ENCODE measurements at regions of chr3 and their contacts with region 1.

Region 1: GRCh38 chr3:61809879-61810278 is 248.5 kb downstream of the PTPRG start:
- DNase-seq: no peak
- ATAC-seq: no peak
- H3K4me3 ChIP-seq: no peak overlapping the region
- H3K27ac ChIP-seq: no peak overlapping the region
- H3K4me1 ChIP-seq: no peaks in the 10 kb centered on the region
- H3K27me3 ChIP-seq: no peaks in the 10 kb centered on the region
- CTCF ChIP-seq: no peak
- EP300 ChIP-seq: no peak
- POLR2A ChIP-seq: no peak
- RAD21 ChIP-seq: no peak

Region 2: DNA sequence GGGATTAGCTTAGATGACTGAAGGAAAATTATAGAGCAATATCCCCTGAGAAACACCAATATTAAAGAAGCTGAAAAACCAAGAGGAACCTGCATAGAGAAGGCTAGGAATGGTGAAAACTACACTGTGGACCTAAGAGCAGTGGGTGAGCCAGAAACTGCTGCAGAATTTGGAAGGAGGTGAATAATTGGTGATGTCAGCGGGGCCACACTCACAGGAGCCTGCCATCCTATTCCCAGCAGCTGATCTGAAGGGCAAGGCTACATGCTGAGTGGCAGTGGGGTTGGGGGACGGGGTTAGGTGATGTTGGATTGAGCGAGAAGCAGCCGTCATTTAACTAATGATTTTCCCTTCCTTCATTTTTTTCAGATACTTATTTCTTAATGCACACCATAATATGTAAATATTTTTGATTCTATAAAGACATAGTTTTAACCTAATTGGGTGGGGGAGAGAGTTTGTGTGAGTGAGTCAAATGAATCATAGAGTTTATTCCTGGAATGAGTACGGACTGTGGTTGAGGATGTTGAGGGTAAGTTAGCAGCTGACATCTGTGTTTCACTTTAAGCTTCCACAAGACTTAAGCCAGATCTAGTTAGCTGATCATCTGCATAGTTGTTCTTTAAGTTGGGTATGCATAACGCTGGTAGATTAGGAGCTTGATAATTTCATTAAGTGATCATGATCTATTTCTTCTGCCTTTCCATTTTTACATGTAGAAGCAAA is 25.7 kb before region 1 on chr3:
- CTCF ChIA-PET with region 1: no interaction called
- POLR2A ChIA-PET with region 1: interaction called, 6 read pairs
- RAD21 ChIA-PET with region 1: interaction called, 5 read pairs
- SMC1A ChIA-PET with region 1: interaction called, 14 read pairs
- in situ Hi-C with region 1: no loop called
- intact Hi-C with region 1: no loop called
- DNase-seq: no peak
- ATAC-seq: peak; percentile 77
- H3K4me3 ChIP-seq: no peak overlapping the region
- H3K27ac ChIP-seq: no peak overlapping the region
- H3K4me1 ChIP-seq: no peaks in the 10 kb centered on the region
- H3K27me3 ChIP-seq: no peaks in the 10 kb centered on the region; a peak in 1 of 4 replicates
- CTCF ChIP-seq: no peak
- EP300 ChIP-seq: no peak
- POLR2A ChIP-seq: no peak
- RAD21 ChIP-seq: no peak

Region 3: DNA sequence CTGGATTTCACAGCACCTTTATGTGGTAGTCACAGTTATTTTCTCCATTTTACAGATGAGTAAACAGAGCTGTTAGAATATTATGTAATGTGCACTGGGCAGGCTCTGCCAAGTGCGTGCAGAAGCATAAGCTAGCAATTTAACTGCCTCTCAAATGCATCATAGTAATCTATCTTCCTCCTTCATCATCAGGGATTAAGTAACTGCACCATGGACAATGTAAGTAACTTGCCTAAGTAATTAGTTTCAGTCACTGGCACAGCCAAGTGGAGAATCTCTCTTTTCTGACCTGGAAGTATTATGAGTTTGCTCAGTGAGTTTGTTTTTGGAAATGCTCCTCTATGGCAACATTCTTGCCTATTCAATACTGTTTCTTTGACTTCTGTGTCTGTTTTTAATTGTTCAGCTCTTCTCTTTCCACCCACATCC is 12.0 kb after region 1 on chr3:
- CTCF ChIA-PET with region 1: interaction called, 3 read pairs
- POLR2A ChIA-PET with region 1: interaction called, 7 read pairs
- RAD21 ChIA-PET with region 1: interaction called, 5 read pairs
- SMC1A ChIA-PET with region 1: interaction called, 10 read pairs
- in situ Hi-C with region 1: no loop called
- intact Hi-C with region 1: no loop called
- DNase-seq: no peak
- ATAC-seq: peak; percentile 41
- H3K4me3 ChIP-seq: no peak overlapping the region
- H3K27ac ChIP-seq: no peak overlapping the region
- H3K4me1 ChIP-seq: no peaks in the 10 kb centered on the region
- H3K27me3 ChIP-seq: no peaks in the 10 kb centered on the region
- CTCF ChIP-seq: no peak
- EP300 ChIP-seq: no peak
- POLR2A ChIP-seq: no peak
- RAD21 ChIP-seq: no peak

Region 4: DNA sequence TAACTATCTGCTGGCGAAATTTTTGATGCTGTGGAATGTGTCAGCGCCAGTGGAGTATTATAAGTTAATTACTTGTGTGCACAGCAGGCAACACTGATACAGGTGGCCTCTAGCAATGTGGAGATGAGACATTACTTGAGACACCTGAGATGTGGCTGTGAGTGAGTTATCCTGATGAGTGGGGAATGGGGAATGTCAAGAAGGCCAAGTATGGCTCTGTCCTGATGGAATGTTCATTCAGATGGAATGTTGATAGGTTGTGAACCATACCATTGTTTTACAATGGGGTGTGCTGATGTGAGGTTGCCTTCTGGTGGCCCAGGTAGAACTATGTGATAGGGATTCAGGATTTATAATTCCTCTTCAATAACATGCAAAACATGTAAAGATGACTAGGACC is 156.3 kb after region 1 on chr3:
- CTCF ChIA-PET with region 1: no interaction called
- POLR2A ChIA-PET with region 1: no interaction called
- RAD21 ChIA-PET with region 1: no interaction called
- SMC1A ChIA-PET with region 1: no interaction called
- in situ Hi-C with region 1: no loop called
- intact Hi-C with region 1: no loop called
- DNase-seq: no peak
- ATAC-seq: no peak
- H3K4me3 ChIP-seq: no peak overlapping the region
- H3K27ac ChIP-seq: no peak overlapping the region
- H3K4me1 ChIP-seq: no peaks in the 10 kb centered on the region
- H3K27me3 ChIP-seq: no peaks in the 10 kb centered on the region
- CTCF ChIP-seq: no peak
- EP300 ChIP-seq: no peak
- POLR2A ChIP-seq: no peak
- RAD21 ChIP-seq: no peak